PC-9 (cell line): ENCODE measurements at regions of chr22 and their contacts with region 1.

Region 1: DNA sequence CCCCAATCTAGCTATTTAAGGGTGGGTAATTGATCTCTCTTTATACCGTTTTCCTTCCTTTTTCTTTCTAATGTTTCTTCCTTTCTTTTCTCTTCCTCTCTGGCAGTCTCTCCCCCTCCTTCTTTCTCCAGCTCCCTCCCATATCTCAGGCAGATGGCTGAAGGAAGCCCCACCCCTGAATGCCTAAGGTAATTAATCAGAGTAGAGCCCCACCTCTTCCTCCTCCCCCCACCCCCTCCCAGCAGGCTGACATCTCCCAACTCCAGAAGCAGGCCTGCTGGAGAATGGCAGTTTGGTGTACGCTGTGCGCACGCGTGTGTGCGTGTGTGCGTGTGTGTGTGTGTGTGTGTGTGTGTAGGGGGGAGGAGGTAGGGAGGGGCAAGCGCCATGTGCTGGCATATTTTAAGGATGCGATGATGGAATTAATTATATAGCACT is 122.6 kb downstream of the APOL5 start:
- DNase-seq: peak; percentile 71 to 91
- H3K4me3 ChIP-seq: peak overlapping the region; percentile 69
- H3K27ac ChIP-seq: peak overlapping the region; percentile 85
- H3K4me1 ChIP-seq: peaks cover 62% of the 10 kb centered on the region
- H3K27me3 ChIP-seq: no peaks in the 10 kb centered on the region
- CTCF ChIP-seq: no peak

Region 2: DNA sequence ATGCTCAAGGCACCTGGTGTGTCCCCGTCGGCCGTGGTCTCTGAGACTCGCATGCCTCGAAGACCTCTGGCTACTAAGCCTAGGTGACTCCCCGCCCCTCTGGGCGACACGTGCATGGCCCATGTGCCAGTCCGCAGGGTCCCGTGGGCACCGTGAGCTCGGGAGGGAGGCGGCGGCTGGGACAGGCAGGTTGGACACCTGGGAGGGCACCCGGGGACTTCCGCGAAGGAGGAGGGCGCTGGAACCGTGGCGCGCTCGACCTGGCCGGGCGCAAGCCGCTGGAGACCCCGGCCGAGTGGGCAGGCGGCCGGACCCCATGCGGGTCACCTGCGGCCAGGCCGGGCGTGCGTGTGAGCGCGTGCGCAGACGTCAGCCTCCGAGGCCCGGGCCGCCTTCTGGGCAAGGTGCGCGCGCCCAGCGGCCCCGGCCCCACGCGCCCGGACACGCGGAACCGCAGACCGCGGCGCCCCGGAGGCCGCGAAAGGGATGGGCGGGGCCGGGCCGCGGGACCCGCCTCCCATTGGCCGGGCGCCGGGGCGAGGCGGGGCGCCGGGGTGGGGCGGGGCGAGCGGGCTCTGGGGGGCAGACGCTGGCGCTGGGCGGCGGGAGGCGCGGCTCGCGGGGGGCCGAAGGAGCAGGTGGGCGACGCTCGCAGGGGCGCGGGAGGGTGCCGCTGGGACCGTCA is 300.3 kb before region 1 on chr22:
- CTCF ChIA-PET with region 1: no interaction called
- POLR2A ChIA-PET with region 1: no interaction called
- intact Hi-C with region 1: no loop called
- DNase-seq: peak in 1 of 2 experiments; percentile 58
- H3K4me3 ChIP-seq: peak overlapping the region; percentile 90
- H3K27ac ChIP-seq: no peak overlapping the region
- H3K4me1 ChIP-seq: peaks cover 32% of the 10 kb centered on the region
- H3K27me3 ChIP-seq: no peaks in the 10 kb centered on the region
- CTCF ChIP-seq: no peak

Region 3: GRCh38 chr22:35578836-35579575 is 261.3 kb before region 1 on chr22:
- CTCF ChIA-PET with region 1: no interaction called
- POLR2A ChIA-PET with region 1: no interaction called
- intact Hi-C with region 1: no loop called
- DNase-seq: no peak
- H3K4me3 ChIP-seq: no peak overlapping the region
- H3K27ac ChIP-seq: no peak overlapping the region
- H3K4me1 ChIP-seq: peaks cover 20% of the 10 kb centered on the region
- H3K27me3 ChIP-seq: no peaks in the 10 kb centered on the region
- CTCF ChIP-seq: no peak

Region 4: GRCh38 chr22:35589071-35589952 is 251.0 kb before region 1 on chr22:
- CTCF ChIA-PET with region 1: no interaction called
- POLR2A ChIA-PET with region 1: interaction called, 18 read pairs
- intact Hi-C with region 1: no loop called
- DNase-seq: peak; percentile 96 to 100
- H3K4me3 ChIP-seq: peak overlapping the region; percentile 62; the same call in 1 of the 2 replicates
- H3K27ac ChIP-seq: peak overlapping the region; percentile 98
- H3K4me1 ChIP-seq: peaks cover 90% of the 10 kb centered on the region
- H3K27me3 ChIP-seq: no peaks in the 10 kb centered on the region
- CTCF ChIP-seq: no peak

Region 5: DNA sequence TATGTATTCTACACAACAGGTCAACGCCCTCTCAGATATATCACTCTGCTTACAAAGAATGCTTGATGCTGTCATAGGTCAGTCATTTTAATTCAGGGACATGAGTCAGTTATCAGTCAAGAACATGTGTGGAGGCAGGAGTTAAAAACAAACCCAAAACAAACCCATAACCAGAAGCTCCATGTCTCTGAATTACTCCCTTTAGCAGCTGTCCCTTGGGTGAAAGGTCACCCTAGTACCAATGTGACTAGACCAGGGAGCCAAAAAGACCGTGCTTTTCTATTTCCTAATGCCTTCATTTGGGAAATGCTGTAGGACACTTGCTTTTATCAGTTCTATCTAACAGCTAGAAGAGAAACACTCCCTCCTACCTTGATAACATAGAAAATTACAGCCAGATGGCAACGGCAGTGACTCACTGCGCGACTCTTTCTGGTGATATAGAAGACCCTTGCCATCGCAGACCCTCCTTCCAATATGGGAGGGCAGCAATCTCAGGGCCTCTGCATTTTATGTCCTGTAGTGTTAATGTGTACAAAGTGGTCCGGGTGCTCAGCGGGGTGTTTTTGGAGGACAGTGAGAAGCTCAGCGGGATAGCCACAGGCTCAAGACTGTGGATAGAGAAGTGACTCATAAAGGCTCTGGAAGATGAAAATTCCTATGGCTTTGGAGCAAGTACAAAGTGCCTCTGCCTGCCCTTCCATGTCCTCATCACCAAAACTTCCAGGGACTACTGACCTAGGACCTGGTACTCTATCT is 97.8 kb before region 1 on chr22:
- CTCF ChIA-PET with region 1: no interaction called
- POLR2A ChIA-PET with region 1: interaction called, 10 read pairs
- intact Hi-C with region 1: no loop called
- DNase-seq: peak; percentile 27 to 76
- H3K4me3 ChIP-seq: no peak overlapping the region
- H3K27ac ChIP-seq: peak overlapping the region; percentile 56
- H3K4me1 ChIP-seq: peaks cover 20% of the 10 kb centered on the region
- H3K27me3 ChIP-seq: no peaks in the 10 kb centered on the region
- CTCF ChIP-seq: no peak

Region 6: DNA sequence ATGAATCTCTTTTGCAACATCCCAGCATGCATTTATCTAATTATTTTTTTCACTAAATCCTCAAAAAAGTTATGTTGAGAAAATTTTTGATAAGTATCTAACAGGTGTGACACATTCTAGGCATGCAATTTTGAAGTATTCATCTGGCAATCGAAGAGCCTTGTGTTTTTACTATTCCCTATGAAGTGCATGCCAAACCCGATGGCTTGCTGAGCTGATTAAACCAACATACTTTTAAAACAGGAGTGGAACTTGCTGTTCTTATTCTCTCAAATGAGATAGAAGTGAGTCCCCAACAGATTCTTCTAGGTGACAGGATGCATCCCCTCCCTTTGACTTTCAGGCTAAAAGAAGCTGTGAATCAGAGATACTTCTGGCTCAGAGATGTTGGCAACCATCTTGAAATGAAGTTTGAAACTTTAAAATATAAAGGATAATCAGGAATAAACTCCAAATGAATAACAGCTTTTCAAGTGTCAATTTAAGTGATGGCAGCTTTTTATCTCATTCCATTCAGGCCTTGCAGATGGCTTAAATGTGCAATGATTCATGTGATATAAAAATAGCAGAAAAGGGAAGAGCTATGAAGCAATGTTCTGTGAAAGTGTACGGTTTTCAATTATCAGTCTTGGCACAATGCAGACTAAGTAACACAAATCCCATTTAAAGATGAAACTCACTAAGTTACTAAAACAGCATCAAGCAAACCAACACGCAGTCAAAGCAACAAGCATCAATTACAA is 55.0 kb before region 1 on chr22:
- CTCF ChIA-PET with region 1: interaction called, 5 read pairs
- POLR2A ChIA-PET with region 1: interaction called, 7 read pairs
- intact Hi-C with region 1: loop called (anchors 2 kb)
- DNase-seq: no peak
- H3K4me3 ChIP-seq: no peak overlapping the region
- H3K27ac ChIP-seq: peak overlapping the region; percentile 94
- H3K4me1 ChIP-seq: peaks cover 34% of the 10 kb centered on the region
- H3K27me3 ChIP-seq: no peaks in the 10 kb centered on the region
- CTCF ChIP-seq: no peak

Region 7: DNA sequence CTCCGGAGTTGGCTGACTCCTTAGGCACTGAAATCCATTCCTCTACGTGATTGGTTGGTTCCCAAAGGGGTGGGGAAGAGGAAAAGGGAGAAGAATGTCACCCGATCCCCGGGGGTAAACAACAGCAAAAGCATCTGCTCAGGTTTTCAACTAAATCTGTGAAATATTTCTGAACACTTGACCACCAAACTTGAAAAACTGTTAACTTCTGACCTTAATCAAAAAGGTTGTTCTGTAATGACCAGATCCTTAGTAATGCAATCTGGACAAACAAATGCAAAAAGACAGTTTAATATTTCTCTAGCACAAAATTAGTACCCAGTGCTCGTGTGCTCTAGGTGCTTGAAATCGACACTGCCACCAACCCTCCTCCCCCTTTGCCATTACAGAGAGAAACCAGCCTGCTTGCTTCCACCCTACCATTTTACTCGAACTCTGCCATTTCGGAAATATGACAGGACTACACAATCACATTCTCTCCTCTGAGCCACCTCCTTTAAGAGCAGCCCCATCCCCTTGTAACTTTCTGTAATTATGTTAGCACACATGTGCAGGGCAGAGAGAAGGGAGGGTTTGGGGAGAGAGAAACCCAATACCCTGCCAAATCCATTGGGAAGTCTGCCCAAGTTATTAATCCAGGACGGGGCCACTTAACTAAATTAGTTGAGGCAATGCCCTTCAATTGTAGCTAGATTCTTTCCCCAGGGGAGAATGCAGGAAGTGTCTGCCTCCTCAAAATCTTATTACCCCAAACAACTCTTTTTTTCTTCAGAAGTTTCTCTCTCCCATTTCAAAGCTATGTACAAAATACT is 74.5 kb after region 1 on chr22:
- CTCF ChIA-PET with region 1: interaction called, 3 read pairs
- POLR2A ChIA-PET with region 1: interaction called, 3 read pairs
- intact Hi-C with region 1: loop called (anchors 2 kb)
- DNase-seq: peak; percentile 67 to 94
- H3K4me3 ChIP-seq: peak overlapping the region; percentile 46
- H3K27ac ChIP-seq: peak overlapping the region; percentile 80
- H3K4me1 ChIP-seq: peaks cover 58% of the 10 kb centered on the region
- H3K27me3 ChIP-seq: no peaks in the 10 kb centered on the region
- CTCF ChIP-seq: no peak

Region 8: DNA sequence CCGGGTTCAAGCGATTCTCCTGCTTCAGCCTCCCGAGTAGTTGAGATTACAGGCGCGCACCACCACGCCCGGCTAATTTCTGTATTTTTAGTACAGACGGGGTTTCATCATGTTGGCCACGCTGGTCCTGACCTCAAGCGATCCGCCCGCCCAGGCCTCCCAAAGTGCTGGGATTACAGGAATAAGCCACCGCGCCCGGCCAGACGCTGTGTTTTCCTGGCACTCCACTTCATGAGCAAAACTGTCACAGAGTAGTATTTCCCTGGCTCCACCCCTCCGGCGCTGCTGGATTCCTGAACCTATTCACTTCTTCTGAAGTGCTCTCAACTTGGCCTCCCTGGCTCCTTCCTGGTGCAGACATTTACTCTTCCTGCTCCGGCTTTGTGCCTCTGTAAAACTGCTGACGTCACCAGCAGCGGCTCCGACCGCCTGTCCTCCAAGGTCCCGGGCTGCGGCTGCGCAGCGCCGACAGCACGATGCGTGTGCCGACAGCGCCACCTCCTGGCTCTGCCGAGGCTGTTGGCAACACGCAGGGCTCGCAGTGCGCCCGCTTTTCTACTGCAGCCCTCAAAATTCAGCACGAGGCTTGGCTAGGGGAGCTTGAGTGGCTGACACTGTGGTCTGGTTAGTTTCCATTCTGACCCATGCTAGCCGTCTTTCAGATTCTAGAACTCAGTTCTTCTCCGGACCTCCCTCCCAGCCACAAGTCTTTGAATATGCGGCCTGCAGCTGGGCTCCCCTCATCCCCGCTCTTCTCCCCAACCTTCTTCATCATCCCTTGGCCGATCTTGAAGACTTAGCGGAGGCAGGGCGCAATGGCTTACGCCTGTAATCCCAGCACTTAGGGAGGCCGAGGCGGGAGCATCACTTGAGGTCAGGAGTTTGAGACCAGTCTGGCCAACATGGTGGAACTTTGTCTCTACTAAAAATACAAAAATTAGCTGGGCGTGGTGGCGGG is 283.6 kb after region 1 on chr22:
- CTCF ChIA-PET with region 1: no interaction called
- POLR2A ChIA-PET with region 1: no interaction called
- intact Hi-C with region 1: loop called (anchors 5 kb)
- DNase-seq: peak; percentile 94 to 97
- H3K4me3 ChIP-seq: peak overlapping the region; percentile 50
- H3K27ac ChIP-seq: peak overlapping the region; percentile 76
- H3K4me1 ChIP-seq: peaks cover 8% of the 10 kb centered on the region
- H3K27me3 ChIP-seq: 0 out of 2 replicates have a peak, but pooled peaks cover 3% of the 10 kb centered on the region
- CTCF ChIP-seq: peak; percentile 99